Naive thymus-derived CD4-positive, alpha-beta T cell (primary cell): ENCODE measurements at regions of chr14 and their contacts with region 1.

Region 1: DNA sequence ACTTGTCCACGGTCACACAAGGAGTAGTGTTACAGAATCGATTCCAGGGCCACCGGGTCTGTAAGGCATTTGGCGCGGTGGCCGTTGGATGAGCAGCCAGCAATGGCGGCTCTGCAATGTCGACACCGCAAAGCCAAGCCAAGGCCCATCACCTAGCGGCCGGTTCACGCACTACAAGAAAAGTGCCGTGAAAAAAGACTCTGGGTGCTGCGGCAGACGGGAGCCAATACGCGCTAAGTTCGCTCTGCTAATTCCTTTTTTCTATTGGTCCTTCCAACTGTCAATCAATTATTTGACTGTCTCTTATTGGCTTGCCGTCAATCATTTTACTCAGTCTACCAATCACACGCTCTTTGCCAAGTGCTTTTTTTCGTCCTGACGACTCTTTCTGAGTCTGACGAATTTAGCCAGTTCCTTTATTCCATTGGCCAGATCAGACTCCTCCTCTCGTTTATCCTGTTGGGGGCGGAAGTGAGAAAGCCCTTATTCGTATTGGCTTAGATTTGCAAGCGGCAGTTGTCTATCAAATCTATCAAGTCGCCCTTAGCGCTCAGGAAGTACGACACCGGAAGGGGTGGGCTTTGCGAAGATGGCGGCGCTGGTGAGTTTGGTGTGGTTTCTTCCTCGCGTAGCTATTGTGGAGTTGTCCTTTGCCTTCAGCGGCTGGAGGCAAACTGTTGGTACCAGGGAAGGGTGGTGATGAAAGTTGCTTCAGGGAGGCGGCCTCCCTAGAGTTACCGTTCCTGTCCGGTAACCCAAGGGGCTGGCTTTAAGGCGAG is at the start of gene NGDN:
- DNase-seq: peak; percentile 76 to 99 (median 96)
- ATAC-seq: peak; percentile 94
- H3K4me3 ChIP-seq: peak within 1 kb of the TSS; percentile 73
- H3K4me3 Mint-ChIP-seq: peak within 1 kb of the TSS in 1 of 10 donors; percentile 77
- H3K27ac ChIP-seq: peak within 1 kb of the TSS; percentile 94
- H3K27ac Mint-ChIP-seq: peak within 1 kb of the TSS in 2 of 9 donors; percentile 26 to 68
- H3K4me1 ChIP-seq: peaks cover 6 to 11% of the 10 kb centered on the region in 2 donors
- H3K4me1 Mint-ChIP-seq: peaks cover 7 to 10% (median 7%) of the 10 kb centered on the region in 7 donors
- H3K27me3 ChIP-seq: no peaks in the 10 kb centered on the region
- H3K27me3 Mint-ChIP-seq: no peaks in the 10 kb centered on the region
- total RNA-seq, gene NGDN: 52.9 to 152 (median 74.0) TPM

Region 2: DNA sequence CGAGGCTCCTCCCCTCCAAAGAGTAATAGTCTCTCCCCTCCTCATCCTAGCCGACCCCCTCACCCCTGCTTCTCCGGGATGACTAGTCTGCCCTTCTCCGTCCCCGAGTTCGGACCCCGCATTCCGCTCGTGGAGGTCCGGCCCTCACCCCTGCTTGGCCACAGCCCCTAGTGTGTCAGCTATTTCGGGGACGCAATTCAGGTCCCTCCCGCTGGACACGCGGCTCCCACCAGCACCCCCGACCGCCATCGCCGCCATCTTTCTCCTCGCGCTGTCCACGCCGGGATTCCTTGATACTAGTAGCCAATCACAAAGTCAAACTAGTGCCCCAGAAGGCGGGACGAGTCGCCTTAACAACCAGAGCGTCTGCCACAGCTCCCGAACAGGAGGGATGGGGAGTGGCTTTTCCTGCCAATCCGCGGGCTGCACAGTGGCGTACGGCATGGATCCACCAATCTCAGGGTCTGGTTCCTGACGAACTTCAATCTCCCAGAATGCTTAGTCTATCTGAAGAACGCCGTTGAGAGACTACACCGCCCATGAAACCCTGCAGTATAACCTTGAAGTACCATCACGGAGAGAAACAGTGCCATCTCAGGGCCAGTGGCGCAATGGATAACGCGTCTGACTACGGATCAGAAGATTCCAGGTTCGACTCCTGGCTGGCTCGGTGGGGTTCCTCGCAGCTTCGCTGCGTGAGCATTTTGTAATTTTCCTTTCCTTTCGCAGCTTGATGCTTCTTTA is 540.0 kb before region 1 on chr14 and contains the start of gene PRMT5:
- CTCF ChIA-PET with region 1: no interaction called
- POLR2A ChIA-PET with region 1: no interaction called
- intact Hi-C with region 1: loop called in 1 of 2 experiments (anchors 1 kb)
- DNase-seq: peak; percentile 81 to 100 (median 99)
- ATAC-seq: peak; percentile 97
- H3K4me3 ChIP-seq: peak within 1 kb of the TSS; percentile 91
- H3K4me3 Mint-ChIP-seq: no peak within 1 kb of the TSS
- H3K27ac ChIP-seq: peak within 1 kb of the TSS; percentile 91
- H3K27ac Mint-ChIP-seq: no peak within 1 kb of the TSS
- H3K4me1 ChIP-seq: peaks cover 9 to 17% of the 10 kb centered on the region in 2 donors
- H3K4me1 Mint-ChIP-seq: peaks cover 5 to 36% (median 20%) of the 10 kb centered on the region in 7 donors
- H3K27me3 ChIP-seq: no peaks in the 10 kb centered on the region
- H3K27me3 Mint-ChIP-seq: no peaks in the 10 kb centered on the region
- total RNA-seq, gene PRMT5: 24.9 to 82.8 (median 34.2) TPM

Region 3: DNA sequence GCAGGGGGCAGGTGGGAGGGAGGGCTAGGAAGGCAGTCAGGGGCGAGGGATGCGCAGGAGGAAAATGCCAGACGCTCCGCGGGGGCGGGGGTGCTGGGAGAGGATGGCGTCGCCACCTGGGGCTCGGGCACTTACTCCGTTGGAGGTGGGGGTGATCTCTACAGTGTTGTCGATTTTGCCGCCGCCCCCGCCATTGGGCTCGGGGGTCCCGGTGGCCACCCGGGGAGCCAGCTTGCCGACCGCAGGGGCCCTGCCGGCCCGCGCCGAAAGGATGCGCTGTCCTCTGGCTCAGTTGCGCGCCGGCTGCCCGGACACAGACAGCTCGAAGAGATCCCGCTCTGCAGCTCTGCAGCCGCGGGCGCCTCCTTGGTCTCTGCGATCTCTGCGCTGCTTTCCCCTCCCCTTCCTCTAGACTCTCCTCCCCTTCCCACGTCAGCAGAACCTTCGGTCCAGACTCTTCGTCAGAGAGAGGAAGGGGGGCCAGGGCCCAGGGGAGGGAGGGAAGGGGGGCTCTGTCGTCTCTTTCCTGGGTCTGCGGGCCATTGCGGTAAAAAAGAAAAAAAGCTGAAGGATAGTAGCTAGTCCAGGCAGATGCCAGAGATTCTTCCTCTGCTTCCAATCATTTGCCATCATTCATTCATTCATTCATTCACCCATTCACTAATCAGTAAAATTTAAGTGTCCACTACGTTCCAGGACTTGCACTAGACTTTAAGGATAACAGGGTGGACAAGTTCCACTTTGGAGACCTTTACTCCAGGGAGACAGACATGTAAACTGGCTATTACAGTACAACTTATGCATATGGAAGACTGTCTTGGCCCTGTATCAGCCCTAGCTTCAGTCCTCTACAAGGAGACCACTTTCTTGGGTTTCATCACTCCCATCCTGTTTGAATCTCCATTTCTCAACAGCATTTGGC is 116.5 kb before region 1 on chr14 and contains the start of gene SLC22A17:
- CTCF ChIA-PET with region 1: no interaction called
- POLR2A ChIA-PET with region 1: no interaction called
- intact Hi-C with region 1: loop called in 1 of 2 experiments (anchors 1 kb)
- DNase-seq: peak; percentile 42 to 80 (median 67)
- ATAC-seq: peak; percentile 93
- H3K4me3 ChIP-seq: peak within 1 kb of the TSS; percentile 54
- H3K4me3 Mint-ChIP-seq: peak within 1 kb of the TSS; percentile 78 to 92 (median 88)
- H3K27ac ChIP-seq: peak within 1 kb of the TSS; percentile 58
- H3K27ac Mint-ChIP-seq: peak within 1 kb of the TSS in 8 of 9 donors; percentile 5 to 93 (median 77)
- H3K4me1 ChIP-seq: no peaks in the 10 kb centered on the region
- H3K4me1 Mint-ChIP-seq: peaks cover 10 to 25% (median 18%) of the 10 kb centered on the region in 7 donors
- H3K27me3 ChIP-seq: no peaks in the 10 kb centered on the region
- H3K27me3 Mint-ChIP-seq: peaks cover 0 to 55% (median 33%) of the 10 kb centered on the region in 5 donors
- total RNA-seq, gene SLC22A17: 1.9 to 30.0 (median 22.6) TPM

Region 4: GRCh38 chr14:23436327-23437132 is 32.8 kb before region 1 on chr14:
- CTCF ChIA-PET with region 1: no interaction called
- POLR2A ChIA-PET with region 1: no interaction called
- intact Hi-C with region 1: no loop called
- DNase-seq: peak in 1 of 9 donors; percentile 13
- ATAC-seq: no peak
- H3K4me3 ChIP-seq: no peak overlapping the region
- H3K4me3 Mint-ChIP-seq: no peak overlapping the region
- H3K27ac ChIP-seq: no peak overlapping the region
- H3K27ac Mint-ChIP-seq: no peak overlapping the region
- H3K4me1 ChIP-seq: no peaks in the 10 kb centered on the region
- H3K4me1 Mint-ChIP-seq: peaks cover 0 to 11% (median 0%) of the 10 kb centered on the region in 7 donors
- H3K27me3 ChIP-seq: no peaks in the 10 kb centered on the region
- H3K27me3 Mint-ChIP-seq: peaks cover 0 to 11% (median 0%) of the 10 kb centered on the region in 5 donors

Region 5: DNA sequence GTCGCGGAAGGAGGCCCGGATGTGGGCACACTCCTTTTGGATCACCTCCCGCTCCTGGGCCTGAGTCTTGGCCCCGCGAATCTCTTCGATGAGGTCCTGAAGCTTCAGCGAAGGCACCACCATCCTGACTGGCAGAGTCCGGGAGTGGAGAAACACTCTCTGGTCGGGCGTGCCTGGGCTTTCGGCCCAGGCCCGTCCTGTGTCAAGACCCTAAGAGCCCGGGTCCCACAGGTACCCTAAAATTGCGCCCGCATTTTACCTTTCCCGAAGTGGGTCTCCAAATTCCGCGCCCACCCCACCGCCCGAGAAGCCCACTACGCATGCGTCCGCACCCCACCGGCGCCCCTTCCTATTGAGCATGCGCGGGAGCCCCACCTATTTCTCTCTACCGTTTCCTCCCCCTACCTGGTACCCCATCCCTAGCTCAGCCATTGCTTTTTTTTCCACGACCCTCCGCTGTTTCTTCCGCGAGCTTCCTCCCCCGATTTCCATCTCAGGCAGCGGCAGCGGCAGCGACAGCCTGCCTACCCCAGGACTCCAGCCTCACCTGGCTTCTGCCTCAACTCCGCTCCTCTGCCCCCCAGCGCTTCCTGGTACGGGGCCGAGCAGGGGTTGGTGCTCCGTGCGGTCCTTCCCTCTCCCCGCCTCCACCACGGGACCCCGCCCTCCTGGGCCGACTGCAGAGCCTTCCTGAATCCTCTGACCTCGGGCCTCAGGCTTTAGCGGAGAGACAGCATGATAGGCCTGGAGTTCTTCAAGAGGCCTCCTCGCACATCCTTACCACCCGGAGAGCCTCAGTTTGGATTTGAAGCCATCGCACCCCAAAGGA is 98.1 kb after region 1 on chr14 and contains the start of gene AP1G2:
- CTCF ChIA-PET with region 1: interaction called, 7 read pairs
- POLR2A ChIA-PET with region 1: no interaction called
- intact Hi-C with region 1: loop called in 1 of 2 experiments (anchors 2 kb)
- DNase-seq: peak; percentile 67 to 87 (median 83)
- ATAC-seq: peak; percentile 93
- H3K4me3 ChIP-seq: peak within 1 kb of the TSS; percentile 98
- H3K4me3 Mint-ChIP-seq: peak within 1 kb of the TSS; percentile 98 to 100 (median 99)
- H3K27ac ChIP-seq: peak within 1 kb of the TSS; percentile 81
- H3K27ac Mint-ChIP-seq: peak within 1 kb of the TSS; percentile 96 to 99 (median 98)
- H3K4me1 ChIP-seq: peaks cover 14 to 16% of the 10 kb centered on the region in 2 donors
- H3K4me1 Mint-ChIP-seq: peaks cover 19 to 48% (median 43%) of the 10 kb centered on the region in 7 donors
- H3K27me3 ChIP-seq: no peaks in the 10 kb centered on the region
- H3K27me3 Mint-ChIP-seq: peaks cover 0 to 11% (median 0%) of the 10 kb centered on the region in 5 donors
- total RNA-seq, gene AP1G2: 266 to 548 (median 293) TPM

Region 6: GRCh38 chr14:24013654-24014514 is 544.6 kb after region 1 on chr14:
- CTCF ChIA-PET with region 1: no interaction called
- POLR2A ChIA-PET with region 1: no interaction called
- intact Hi-C with region 1: loop called in 1 of 2 experiments (anchors 5 kb)
- DNase-seq: peak in 8 of 9 donors; percentile 17 to 76 (median 67)
- ATAC-seq: peak; percentile 94
- H3K4me3 ChIP-seq: no peak overlapping the region
- H3K4me3 Mint-ChIP-seq: no peak overlapping the region
- H3K27ac ChIP-seq: no peak overlapping the region
- H3K27ac Mint-ChIP-seq: no peak overlapping the region
- H3K4me1 ChIP-seq: peaks cover 0 to 6% of the 10 kb centered on the region in 2 donors
- H3K4me1 Mint-ChIP-seq: peaks cover 8 to 28% (median 25%) of the 10 kb centered on the region in 7 donors
- H3K27me3 ChIP-seq: no peaks in the 10 kb centered on the region
- H3K27me3 Mint-ChIP-seq: peaks cover 0 to 15% (median 0%) of the 10 kb centered on the region in 5 donors

Region 7: DNA sequence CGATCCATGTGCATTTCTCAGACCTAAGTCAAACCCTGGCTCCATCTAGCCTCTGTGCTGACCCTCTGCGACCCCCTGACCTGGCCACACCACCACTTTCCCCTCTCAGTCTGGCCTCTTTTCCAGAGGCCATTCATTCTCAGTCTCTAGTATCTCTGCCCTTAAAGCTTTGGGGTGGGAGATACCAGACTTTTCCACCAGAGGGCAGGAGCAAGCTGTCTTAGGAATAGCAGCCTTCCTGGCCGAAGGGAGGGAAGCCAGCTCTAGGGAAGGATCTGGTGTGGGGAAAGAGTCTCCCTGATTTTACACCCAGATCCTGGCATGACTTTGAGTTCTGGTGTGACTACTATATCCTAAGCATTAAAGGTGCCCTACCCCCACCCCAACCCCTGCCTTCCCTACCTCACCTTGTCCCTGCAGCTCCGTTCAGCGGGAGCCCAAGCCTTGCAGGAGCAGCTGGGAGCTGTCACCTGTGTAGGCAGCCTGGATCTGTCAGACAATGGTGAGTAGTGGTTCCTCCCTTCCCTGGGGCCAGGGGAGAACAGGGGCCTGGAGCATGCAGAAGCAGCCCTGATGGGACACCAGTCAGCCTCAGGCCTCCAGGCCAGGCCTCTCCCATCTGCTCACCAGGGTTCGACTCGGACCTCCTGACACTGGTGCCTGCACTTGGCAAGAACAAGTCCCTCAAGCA is 589.1 kb after region 1 on chr14:
- CTCF ChIA-PET with region 1: no interaction called
- POLR2A ChIA-PET with region 1: no interaction called
- intact Hi-C with region 1: no loop called
- DNase-seq: peak; percentile 22 to 70 (median 49)
- ATAC-seq: peak; percentile 84
- H3K4me3 ChIP-seq: no peak overlapping the region
- H3K4me3 Mint-ChIP-seq: no peak overlapping the region
- H3K27ac ChIP-seq: no peak overlapping the region
- H3K27ac Mint-ChIP-seq: peak overlapping the region in 5 of 9 donors; percentile 22 to 80 (median 67)
- H3K4me1 ChIP-seq: no peaks in the 10 kb centered on the region
- H3K4me1 Mint-ChIP-seq: peaks cover 0 to 8% (median 2%) of the 10 kb centered on the region in 7 donors
- H3K27me3 ChIP-seq: no peaks in the 10 kb centered on the region
- H3K27me3 Mint-ChIP-seq: peaks cover 0 to 8% (median 2%) of the 10 kb centered on the region in 5 donors